Aorta (tissue), 5 donors: ENCODE measurements at regions of chr4 and their contacts with region 1.

Region 1: GRCh38 chr4:115343171-115343570 is 229.8 kb upstream of the NDST4 start:
- DNase-seq: no peak
- ATAC-seq: no peak
- H3K4me3 ChIP-seq: no peak overlapping the region
- H3K27ac ChIP-seq: no peak overlapping the region
- H3K4me1 ChIP-seq: no peaks in the 10 kb centered on the region
- H3K27me3 ChIP-seq: no peaks in the 10 kb centered on the region

Region 2: DNA sequence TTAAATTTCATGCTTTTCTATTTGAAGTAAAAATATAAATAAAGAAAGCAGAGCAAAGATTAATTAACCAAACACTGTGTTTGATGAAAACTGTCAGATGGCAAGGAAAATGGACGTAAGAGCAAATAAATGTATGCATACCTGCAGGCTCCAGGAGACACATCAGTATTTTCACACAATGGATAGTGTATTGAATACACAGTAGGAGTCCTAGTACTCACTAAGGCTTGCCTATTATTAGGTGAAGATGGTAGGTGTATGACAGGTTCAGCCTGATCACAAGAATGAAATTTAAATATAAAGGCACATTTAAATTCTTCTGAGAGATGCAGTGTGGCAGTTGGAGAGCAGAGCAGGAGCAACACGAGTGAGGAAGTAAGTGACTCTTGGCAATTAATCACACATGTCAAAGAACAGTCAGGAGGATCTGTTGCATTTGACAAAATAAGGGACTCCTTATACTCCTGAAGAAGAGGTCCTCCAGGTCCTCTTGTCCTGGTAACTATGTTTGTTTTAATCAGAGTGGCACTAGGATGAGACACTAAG is 123.8 kb before region 1 on chr4:
- intact Hi-C with region 1: loop called in 1 of 2 experiments (anchors 5 kb)
- DNase-seq: no peak
- ATAC-seq: no peak
- H3K4me3 ChIP-seq: no peak overlapping the region
- H3K27ac ChIP-seq: no peak overlapping the region
- H3K4me1 ChIP-seq: no peaks in the 10 kb centered on the region
- H3K27me3 ChIP-seq: no peaks in the 10 kb centered on the region

Region 3: GRCh38 chr4:115292320-115293092 is 50.7 kb before region 1 on chr4:
- intact Hi-C with region 1: no loop called
- DNase-seq: no peak
- ATAC-seq: no peak
- H3K4me3 ChIP-seq: no peak overlapping the region
- H3K27ac ChIP-seq: no peak overlapping the region
- H3K4me1 ChIP-seq: no peaks in the 10 kb centered on the region
- H3K27me3 ChIP-seq: no peaks in the 10 kb centered on the region